ENCODE measurements at regions of chr17 and their contacts with region 1.

Region 1: GRCh38 chr17:72539981-72540897 is 419.4 kb downstream of the SOX9 start:
- DNase-seq: peak; percentile 45 to 88
- H3K4me3 ChIP-seq: peak overlapping the region; percentile 46; the same call in 1 of the 2 replicates
- H3K27ac ChIP-seq: peak overlapping the region; percentile 68
- H3K4me1 ChIP-seq: peaks cover 16% of the 10 kb centered on the region
- H3K27me3 ChIP-seq: no peaks in the 10 kb centered on the region
- CTCF ChIP-seq: peak; percentile 75

Region 2: DNA sequence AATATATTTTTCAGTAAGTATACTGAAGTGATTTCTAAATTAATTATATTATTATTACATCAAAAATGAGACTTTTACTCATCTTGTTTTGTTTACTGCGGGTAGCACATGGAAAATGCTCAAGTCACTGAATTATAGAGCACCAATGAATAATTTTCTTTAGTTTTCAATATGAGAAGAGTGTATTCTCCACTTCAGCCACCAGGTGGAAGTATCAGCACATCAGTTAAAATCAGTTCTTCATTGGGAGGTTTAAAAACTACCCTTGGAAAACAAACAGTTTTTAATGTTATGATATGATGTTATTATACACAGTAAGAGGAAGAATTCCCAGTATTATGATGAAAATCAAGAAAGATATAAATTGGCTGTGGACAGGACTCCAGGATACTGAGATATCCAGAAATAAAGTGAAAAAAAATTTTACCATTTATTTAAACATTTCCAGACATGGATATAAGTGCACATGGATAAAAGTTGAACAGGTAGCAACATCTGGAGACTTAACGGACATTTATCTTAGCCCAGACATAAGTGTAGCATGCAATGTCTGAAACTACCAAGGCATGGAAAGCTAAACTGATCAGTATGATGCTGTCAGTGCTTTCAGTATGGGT is 1903.6 kb before region 1 on chr17:
- CTCF ChIA-PET with region 1: no interaction called
- POLR2A ChIA-PET with region 1: no interaction called
- intact Hi-C with region 1: loop called (anchors 5 kb)
- DNase-seq: peak in 1 of 2 experiments; percentile 1
- H3K4me3 ChIP-seq: no peak overlapping the region
- H3K27ac ChIP-seq: no peak overlapping the region
- H3K4me1 ChIP-seq: no peaks in the 10 kb centered on the region
- H3K27me3 ChIP-seq: no peaks in the 10 kb centered on the region
- CTCF ChIP-seq: peak; percentile 92

Region 3: DNA sequence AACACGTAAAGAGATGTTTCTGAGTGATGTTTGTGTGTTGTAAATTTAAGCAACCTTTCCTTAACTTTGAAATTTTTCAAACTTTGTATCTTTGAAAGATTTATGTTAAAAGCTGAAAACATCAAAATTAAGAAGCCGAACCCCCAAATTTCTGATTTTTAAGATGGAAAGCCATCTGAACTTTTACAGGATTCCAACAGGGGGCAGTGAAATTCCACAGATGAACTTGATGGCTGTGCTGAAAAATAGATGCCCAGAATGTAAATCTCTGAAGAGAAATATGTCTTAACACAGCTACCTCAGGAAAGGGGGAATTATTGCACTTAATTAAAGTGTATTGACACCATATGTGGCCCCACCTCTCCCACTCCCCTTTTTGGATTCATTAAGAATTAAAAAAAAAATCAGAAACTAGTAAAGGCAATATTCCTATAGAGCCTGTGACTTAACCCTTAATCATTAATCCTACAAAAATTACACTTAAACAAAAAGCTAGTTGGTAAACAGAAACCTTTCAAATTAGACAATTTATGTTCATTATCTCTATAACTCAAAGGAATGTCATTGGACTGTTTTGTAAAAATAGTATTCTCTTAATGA is 1773.0 kb before region 1 on chr17:
- CTCF ChIA-PET with region 1: interaction called, 3 read pairs
- POLR2A ChIA-PET with region 1: no interaction called
- intact Hi-C with region 1: loop called (anchors 2 kb)
- DNase-seq: peak in 1 of 2 experiments; percentile 8
- H3K4me3 ChIP-seq: no peak overlapping the region
- H3K27ac ChIP-seq: no peak overlapping the region
- H3K4me1 ChIP-seq: no peaks in the 10 kb centered on the region
- H3K27me3 ChIP-seq: no peaks in the 10 kb centered on the region
- CTCF ChIP-seq: peak; percentile 97

Region 4: DNA sequence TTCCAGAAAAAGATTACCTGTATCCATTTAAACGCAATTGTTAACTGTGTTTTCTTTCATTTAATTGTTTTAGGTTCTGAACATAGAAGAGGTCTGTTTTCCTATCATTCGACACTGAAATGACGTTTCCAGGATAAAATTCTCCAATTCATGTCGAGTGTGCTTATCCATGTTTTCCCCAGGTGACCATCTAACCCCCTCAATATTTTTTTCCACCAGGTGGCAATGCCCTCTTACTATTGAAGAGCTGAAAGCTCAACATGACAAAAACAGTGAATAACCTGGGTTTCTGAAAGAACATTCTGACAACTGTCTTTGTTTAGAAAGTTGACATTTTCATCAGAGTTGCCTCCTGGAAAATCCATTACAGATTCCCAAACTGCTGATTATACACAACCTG is 1422.2 kb before region 1 on chr17:
- CTCF ChIA-PET with region 1: no interaction called
- POLR2A ChIA-PET with region 1: no interaction called
- intact Hi-C with region 1: loop called (anchors 2 kb)
- DNase-seq: peak in 1 of 2 experiments; percentile 27
- H3K4me3 ChIP-seq: no peak overlapping the region
- H3K27ac ChIP-seq: no peak overlapping the region
- H3K4me1 ChIP-seq: 0 out of 2 replicates have a peak, but pooled peaks cover 3% of the 10 kb centered on the region
- H3K27me3 ChIP-seq: no peaks in the 10 kb centered on the region
- CTCF ChIP-seq: peak; percentile 69

Region 5: GRCh38 chr17:71613996-71614395 is 926.2 kb before region 1 on chr17:
- CTCF ChIA-PET with region 1: no interaction called
- POLR2A ChIA-PET with region 1: no interaction called
- intact Hi-C with region 1: no loop called
- DNase-seq: no peak
- H3K4me3 ChIP-seq: no peak overlapping the region
- H3K27ac ChIP-seq: no peak overlapping the region
- H3K4me1 ChIP-seq: no peaks in the 10 kb centered on the region
- H3K27me3 ChIP-seq: no peaks in the 10 kb centered on the region
- CTCF ChIP-seq: no peak

Region 6: GRCh38 chr17:72126563-72127486 is 413.4 kb before region 1 on chr17:
- CTCF ChIA-PET with region 1: interaction called, 6 read pairs
- POLR2A ChIA-PET with region 1: no interaction called
- intact Hi-C with region 1: loop called (anchors 1 kb)
- DNase-seq: peak; percentile 60 to 97
- H3K4me3 ChIP-seq: peak overlapping the region; percentile 55; the same call in 1 of the 2 replicates
- H3K27ac ChIP-seq: peak overlapping the region; percentile 74
- H3K4me1 ChIP-seq: peaks cover 45% of the 10 kb centered on the region
- H3K27me3 ChIP-seq: no peaks in the 10 kb centered on the region
- CTCF ChIP-seq: 0 out of 2 replicates have a peak, but pooled peaks have one; percentile 6

Region 7: DNA sequence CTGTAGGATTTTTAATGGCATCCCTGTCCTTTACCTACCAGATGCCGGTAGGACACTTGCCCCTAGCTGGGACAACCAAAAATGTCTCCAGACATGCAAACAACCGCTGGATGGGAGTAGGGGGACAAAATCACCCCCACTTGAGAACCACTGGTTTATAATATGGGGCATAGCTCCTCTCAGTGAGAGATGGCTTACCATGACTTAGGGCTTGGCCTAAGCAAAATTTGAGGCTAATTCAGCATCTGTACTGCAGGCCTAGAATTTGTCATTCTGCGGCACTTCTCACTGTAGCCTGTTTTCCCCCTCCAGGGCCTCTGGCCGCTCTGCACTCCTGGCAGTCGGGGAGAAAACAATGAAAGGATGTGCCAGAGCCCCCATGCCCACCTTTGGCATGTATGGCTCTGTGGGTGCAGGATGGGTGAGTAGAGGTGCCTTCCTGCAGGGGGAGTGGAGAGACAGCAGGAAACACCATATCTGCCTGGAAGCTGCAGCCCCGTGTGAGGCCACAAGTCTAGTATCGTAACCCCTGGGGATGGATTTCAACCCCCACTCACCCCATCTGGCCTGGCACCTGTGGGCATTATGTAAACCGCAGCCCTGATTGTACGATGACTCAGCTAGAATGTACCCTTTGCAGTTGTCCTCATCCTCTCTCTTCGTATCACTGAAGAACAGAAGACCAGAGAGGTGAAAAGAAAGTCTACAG is 151.3 kb before region 1 on chr17:
- CTCF ChIA-PET with region 1: no interaction called
- POLR2A ChIA-PET with region 1: no interaction called
- intact Hi-C with region 1: loop called (anchors 1 kb)
- DNase-seq: peak; percentile 86 to 89
- H3K4me3 ChIP-seq: no peak overlapping the region
- H3K27ac ChIP-seq: peak overlapping the region; percentile 87
- H3K4me1 ChIP-seq: peaks cover 86% of the 10 kb centered on the region
- H3K27me3 ChIP-seq: no peaks in the 10 kb centered on the region
- CTCF ChIP-seq: peak; percentile 63

Region 8: DNA sequence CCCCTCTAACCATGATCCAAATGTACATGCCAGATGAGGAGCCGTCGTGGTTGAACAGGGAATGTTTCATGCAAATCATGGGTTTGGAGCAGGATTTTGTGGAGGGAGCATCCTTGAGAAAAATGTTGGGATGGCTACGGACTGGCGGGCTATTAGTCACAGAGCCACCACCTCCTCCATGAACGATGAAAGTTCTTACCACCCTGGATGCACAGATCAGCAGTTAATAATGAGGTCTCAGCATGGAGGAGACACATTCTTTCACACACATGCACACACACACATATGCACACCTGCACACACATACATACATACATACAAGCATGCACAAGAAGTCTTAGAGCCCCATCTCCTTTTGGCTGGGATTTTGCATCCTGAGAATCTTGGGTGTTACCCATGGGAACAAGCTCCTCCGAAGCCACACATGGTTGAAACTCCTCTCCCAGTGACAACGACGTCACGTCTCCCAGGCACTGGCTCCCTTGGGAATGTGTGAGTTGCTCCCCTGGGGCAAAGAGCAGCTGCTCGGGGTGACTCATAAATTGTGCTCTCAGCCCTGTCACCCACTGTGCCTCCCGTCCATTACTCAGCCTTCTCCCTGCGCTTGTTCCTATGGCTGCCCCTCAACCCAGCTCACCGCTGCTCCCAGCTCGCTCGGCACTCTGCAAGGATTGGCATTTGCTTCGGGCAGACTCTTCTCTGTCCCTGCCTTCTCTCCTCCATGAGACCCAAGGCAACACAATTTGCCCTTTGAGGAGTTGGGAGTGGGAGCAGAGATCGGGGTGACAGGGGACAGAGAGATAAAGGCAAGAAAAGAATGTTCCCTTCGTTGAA is 74.8 kb before region 1 on chr17:
- CTCF ChIA-PET with region 1: no interaction called
- POLR2A ChIA-PET with region 1: no interaction called
- intact Hi-C with region 1: loop called (anchors 2 kb)
- DNase-seq: peak; percentile 92 to 97
- H3K4me3 ChIP-seq: peak overlapping the region; percentile 53
- H3K27ac ChIP-seq: peak overlapping the region; percentile 100
- H3K4me1 ChIP-seq: peaks cover 79% of the 10 kb centered on the region
- H3K27me3 ChIP-seq: no peaks in the 10 kb centered on the region
- CTCF ChIP-seq: no peak

Region 9: GRCh38 chr17:72479113-72479512 is 61.1 kb before region 1 on chr17:
- CTCF ChIA-PET with region 1: no interaction called
- POLR2A ChIA-PET with region 1: no interaction called
- intact Hi-C with region 1: no loop called
- DNase-seq: no peak
- H3K4me3 ChIP-seq: no peak overlapping the region
- H3K27ac ChIP-seq: no peak overlapping the region
- H3K4me1 ChIP-seq: peaks cover 44% of the 10 kb centered on the region
- H3K27me3 ChIP-seq: no peaks in the 10 kb centered on the region
- CTCF ChIP-seq: peak; percentile 52; the same call in 1 of the 2 replicates

Measured in PC-9 (cell line).